ENCODE measurements at regions of chr20 and their contacts with region 1.

Region 1: GRCh38 chr20:38221119-38221589 is 39.4 kb downstream of the KIAA1755 start:
- DNase-seq: peak; percentile 60
- H3K4me3 ChIP-seq: no peak overlapping the region
- H3K27ac ChIP-seq: no peak overlapping the region
- H3K4me1 ChIP-seq: peaks cover 13% of the 10 kb centered on the region
- H3K27me3 ChIP-seq: no peaks in the 10 kb centered on the region
- CTCF ChIP-seq: peak; percentile 94 to 97
- POLR2A ChIP-seq: no peak

Region 2: DNA sequence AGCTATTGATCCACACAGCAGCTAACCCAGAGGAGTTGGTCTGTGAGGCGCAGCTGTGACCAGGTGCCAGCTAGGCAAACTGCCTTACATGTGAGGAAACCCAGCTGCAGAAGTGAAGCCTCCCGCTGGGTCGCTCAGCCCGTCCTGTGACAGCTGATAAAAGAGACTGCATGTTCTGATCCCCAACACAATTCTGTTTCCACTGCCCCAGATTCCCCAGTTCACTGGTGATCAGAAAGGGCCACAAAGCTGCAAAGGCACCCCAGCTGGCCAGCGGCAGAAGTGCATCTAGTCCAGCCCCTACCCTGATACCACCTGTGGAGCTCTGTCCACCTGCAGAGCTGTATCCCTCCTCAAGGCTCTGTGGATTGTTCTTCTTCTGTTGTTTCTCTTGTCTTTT is 462.8 kb before region 1 on chr20:
- CTCF ChIA-PET with region 1: no interaction called
- POLR2A ChIA-PET with region 1: no interaction called
- dilution Hi-C with region 1: no loop called
- intact Hi-C with region 1: loop called (anchors 5 kb)
- DNase-seq: no peak
- H3K4me3 ChIP-seq: no peak overlapping the region
- H3K27ac ChIP-seq: no peak overlapping the region
- H3K4me1 ChIP-seq: no peaks in the 10 kb centered on the region
- H3K27me3 ChIP-seq: no peaks in the 10 kb centered on the region
- CTCF ChIP-seq: no peak
- POLR2A ChIP-seq: no peak

Region 3: DNA sequence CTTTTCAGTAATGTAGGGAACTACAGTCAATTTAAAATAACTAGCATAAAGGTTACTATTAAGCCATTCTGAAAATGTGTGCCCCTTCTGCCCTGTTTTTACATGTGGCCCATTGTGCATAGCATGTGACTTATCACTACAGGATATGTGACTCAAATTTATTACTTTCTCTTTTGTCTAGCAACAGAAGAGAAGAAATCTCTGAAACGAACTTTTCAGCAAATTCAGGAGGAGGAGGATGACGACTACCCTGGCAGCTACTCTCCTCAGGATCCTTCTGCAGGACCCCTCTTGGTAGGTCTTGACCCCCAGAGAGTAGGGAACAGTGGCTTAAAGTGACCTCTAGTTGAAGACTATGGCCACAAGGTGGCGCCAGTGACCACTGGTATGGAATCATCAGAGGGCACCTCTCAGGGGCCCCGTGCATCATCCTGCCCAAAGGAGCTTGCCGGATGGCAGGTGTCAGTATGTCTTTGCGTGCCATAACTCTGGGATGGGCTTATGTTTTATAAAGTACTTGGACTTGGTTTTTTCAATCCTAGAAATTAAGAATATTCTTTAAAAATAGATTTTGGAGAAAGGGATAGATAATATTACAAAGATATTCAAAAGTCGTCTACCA is 163.7 kb before region 1 on chr20:
- CTCF ChIA-PET with region 1: interaction called, 130 read pairs
- POLR2A ChIA-PET with region 1: no interaction called
- dilution Hi-C with region 1: no loop called
- intact Hi-C with region 1: loop called (anchors 1 kb)
- DNase-seq: peak; percentile 84
- H3K4me3 ChIP-seq: no peak overlapping the region
- H3K27ac ChIP-seq: peak overlapping the region; percentile 71
- H3K4me1 ChIP-seq: peaks cover 22% of the 10 kb centered on the region
- H3K27me3 ChIP-seq: no peaks in the 10 kb centered on the region
- CTCF ChIP-seq: peak; percentile 76 to 93
- POLR2A ChIP-seq: no peak

Region 4: GRCh38 chr20:38127011-38127621 is 94.0 kb before region 1 on chr20:
- CTCF ChIA-PET with region 1: interaction called, 10 read pairs
- POLR2A ChIA-PET with region 1: no interaction called
- dilution Hi-C with region 1: no loop called
- intact Hi-C with region 1: no loop called
- DNase-seq: peak; percentile 96
- H3K4me3 ChIP-seq: no peak overlapping the region
- H3K27ac ChIP-seq: peak overlapping the region; percentile 60
- H3K4me1 ChIP-seq: peaks cover 52% of the 10 kb centered on the region
- H3K27me3 ChIP-seq: no peaks in the 10 kb centered on the region
- CTCF ChIP-seq: no peak
- POLR2A ChIP-seq: peak; percentile 40

Region 5: DNA sequence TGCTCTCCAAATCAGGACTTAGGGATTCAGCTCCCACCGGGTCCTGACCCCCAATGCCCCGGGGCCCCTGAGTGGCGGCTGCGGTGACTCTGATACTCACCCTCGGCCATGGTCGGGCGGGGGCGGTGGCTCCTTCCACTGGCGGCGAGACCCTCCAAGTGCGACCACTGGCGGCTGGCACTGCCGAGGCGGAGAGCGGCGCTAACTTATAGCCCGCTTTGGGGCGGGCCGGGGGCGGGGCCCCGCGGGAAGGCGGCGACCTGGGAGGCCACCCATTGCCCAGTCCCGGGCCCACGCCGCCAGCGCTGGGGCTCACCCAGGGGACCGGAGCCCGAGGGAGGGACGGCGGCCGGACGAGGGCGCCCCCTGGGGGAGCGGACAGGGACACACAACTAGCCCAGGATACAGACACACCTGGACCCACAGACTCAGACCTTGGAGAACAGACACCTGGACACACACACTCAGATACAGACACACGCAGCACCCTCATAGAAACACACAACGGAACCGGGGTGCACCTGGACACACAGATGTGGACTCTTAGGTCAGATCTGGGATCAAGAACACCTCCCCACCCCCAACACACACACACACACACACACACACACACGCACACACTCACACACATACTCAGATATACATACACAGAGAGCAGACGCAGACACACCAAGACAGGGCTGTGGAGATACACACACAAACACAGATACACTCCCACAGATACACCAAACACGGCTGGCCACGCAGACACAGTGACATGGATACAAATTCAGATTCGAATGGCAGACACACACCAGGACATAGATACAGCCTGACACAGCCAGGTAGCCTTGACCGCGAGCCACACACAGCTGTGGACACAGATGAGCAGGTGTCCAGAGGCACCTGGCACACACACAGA is 55.8 kb before region 1 on chr20 and contains the start of gene TGM2:
- CTCF ChIA-PET with region 1: interaction called, 156 read pairs
- POLR2A ChIA-PET with region 1: interaction called, 3 read pairs
- dilution Hi-C with region 1: no loop called
- intact Hi-C with region 1: loop called (anchors 1 kb)
- DNase-seq: peak; percentile 88
- H3K4me3 ChIP-seq: peak within 1 kb of the TSS; percentile 26 to 96 (median 68)
- H3K27ac ChIP-seq: peak within 1 kb of the TSS; percentile 96
- H3K4me1 ChIP-seq: peaks cover 81% of the 10 kb centered on the region
- H3K27me3 ChIP-seq: no peaks in the 10 kb centered on the region
- CTCF ChIP-seq: peak; percentile 83 to 89
- POLR2A ChIP-seq: peak; percentile 98
- total RNA-seq, gene TGM2: 708 and 868 TPM in 2 replicates

Region 6: GRCh38 chr20:38412877-38413577 is 191.9 kb after region 1 on chr20:
- CTCF ChIA-PET with region 1: interaction called, 18 read pairs
- POLR2A ChIA-PET with region 1: no interaction called
- dilution Hi-C with region 1: no loop called
- intact Hi-C with region 1: no loop called
- DNase-seq: no peak
- H3K4me3 ChIP-seq: no peak overlapping the region
- H3K27ac ChIP-seq: no peak overlapping the region
- H3K4me1 ChIP-seq: no peaks in the 10 kb centered on the region
- H3K27me3 ChIP-seq: no peaks in the 10 kb centered on the region
- CTCF ChIP-seq: no peak
- POLR2A ChIP-seq: no peak

Measured in endothelial cell of umbilical vein (primary cell).